BJ (cell line): ENCODE measurements at regions of chr2 and their contacts with region 1.

Region 1: GRCh38 chr2:69464575-69464974 is 27.3 kb upstream of the NFU1 start:
- DNase-seq: no peak
- H3K4me3 ChIP-seq: no peak overlapping the region
- H3K27me3 ChIP-seq: no peaks in the 10 kb centered on the region
- CTCF ChIP-seq: no peak

Region 2: GRCh38 chr2:69368588-69368987 is 96.0 kb before region 1 on chr2:
- CTCF ChIA-PET with region 1: no interaction called
- POLR2A ChIA-PET with region 1: no interaction called
- DNase-seq: no peak
- H3K4me3 ChIP-seq: no peak overlapping the region
- H3K27me3 ChIP-seq: no peaks in the 10 kb centered on the region
- CTCF ChIP-seq: no peak

Region 3: GRCh38 chr2:69518841-69519240 is 54.3 kb after region 1 on chr2:
- CTCF ChIA-PET with region 1: no interaction called
- POLR2A ChIA-PET with region 1: interaction called, 21 read pairs
- DNase-seq: no peak
- H3K4me3 ChIP-seq: no peak overlapping the region
- H3K27me3 ChIP-seq: no peaks in the 10 kb centered on the region
- CTCF ChIP-seq: no peak